Heart right ventricle (tissue), 16 donors: ENCODE measurements at regions of chr11 and their contacts with region 1.

Region 1: GRCh38 chr11:62427630-62428233 is 8.9 kb downstream of the SCGB1A1 start:
- DNase-seq: no peak
- ATAC-seq: no peak
- H3K4me3 ChIP-seq: no peak overlapping the region
- H3K27ac ChIP-seq: peak overlapping the region in 1 of 10 donors; percentile 72
- H3K4me1 ChIP-seq: peaks cover 0 to 75% (median 9%) of the 10 kb centered on the region in 9 donors
- H3K27me3 ChIP-seq: no peaks in the 10 kb centered on the region
- CTCF ChIP-seq: no peak

Region 2: DNA sequence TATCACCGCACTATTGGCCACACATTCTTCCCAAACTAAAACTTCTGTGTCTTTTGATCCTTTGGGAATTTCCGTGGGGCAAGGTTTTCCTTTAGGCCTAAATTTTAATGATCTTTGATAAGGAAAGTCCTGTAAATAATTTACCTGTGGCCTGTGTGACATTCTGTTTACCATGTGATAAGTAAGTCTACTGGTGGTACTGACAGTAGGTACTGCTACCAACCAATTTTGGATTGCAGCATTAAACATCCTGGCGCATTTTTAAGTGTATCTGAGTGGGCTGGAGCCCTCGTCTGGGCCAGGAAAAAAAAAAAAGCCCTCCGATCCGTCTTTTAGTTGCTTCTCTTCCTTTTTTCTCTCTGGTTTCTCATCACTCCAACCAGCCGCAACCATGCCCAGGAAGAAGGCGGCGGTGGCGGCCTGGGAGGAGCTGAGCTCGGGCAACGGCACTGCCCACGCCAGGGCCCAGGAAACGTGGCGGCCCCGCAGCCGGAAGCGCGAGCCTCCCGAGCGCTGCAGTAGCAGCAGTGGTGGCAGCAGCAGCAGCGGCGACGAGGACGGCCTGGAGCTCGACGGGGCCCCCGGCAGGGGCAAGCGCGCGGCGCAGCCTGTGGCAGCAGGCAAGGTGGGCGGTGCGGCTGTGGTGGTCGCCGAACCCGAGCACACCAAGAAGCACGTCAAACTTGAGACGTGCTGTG is 56.8 kb before region 1 on chr11:
- intact Hi-C with region 1: no loop called
- DNase-seq: peak in 1 of 2 donors; percentile 37
- ATAC-seq: no peak
- H3K4me3 ChIP-seq: peak overlapping the region in 2 of 10 donors; percentile 16 to 30
- H3K27ac ChIP-seq: peak overlapping the region in 1 of 10 donors; percentile 66
- H3K4me1 ChIP-seq: peaks cover 0 to 9% (median 0%) of the 10 kb centered on the region in 9 donors
- H3K27me3 ChIP-seq: no peaks in the 10 kb centered on the region
- CTCF ChIP-seq: no peak

Region 3: DNA sequence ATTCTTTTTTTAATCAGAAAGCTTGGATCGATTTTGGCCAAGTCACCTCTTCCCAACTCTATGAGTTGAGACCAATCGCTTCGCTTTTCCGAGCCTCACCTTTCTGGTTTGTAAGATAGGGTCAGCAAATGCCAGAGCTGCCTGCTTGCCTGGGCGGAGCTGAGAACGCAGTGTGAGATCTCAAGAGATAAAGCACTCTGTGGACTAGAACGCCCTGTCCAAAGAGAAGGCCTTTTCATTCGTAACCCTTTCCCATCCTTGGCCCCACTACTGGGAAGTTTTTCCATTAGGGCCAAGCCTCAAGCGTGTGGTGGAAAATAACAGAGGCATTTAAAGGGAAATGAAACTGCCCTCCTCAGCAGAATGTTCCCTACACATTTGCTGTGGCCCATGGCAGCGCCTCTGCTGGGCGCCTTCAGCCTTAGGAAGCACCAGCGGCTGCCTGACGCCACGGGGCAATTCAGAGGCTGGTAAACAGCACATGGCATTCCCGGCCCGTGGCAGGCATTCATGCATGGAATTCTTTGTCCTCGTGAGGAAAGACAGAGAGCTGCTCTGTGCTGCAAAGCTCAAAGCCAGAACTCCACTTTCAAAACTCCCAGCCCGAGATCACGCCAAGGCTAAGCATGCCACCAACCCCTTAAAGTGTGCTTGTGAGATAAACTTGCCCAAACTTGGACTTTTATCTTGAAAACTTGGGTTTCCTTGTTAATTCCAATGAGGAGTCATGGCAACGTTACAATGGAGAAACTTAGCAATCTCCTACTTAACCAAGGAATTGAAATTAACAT is 80.7 kb after region 1 on chr11:
- intact Hi-C with region 1: loop called in 2 of 10 experiments (anchors 5 to 10 kb)
- DNase-seq: peak; percentile 76 to 80
- ATAC-seq: peak; percentile 78 to 93 (median 89)
- H3K4me3 ChIP-seq: peak overlapping the region in 4 of 10 donors; percentile 19 to 29 (median 21)
- H3K27ac ChIP-seq: peak overlapping the region; percentile 1 to 89 (median 76)
- H3K4me1 ChIP-seq: peaks cover 7 to 67% (median 45%) of the 10 kb centered on the region in 9 donors
- H3K27me3 ChIP-seq: no peaks in the 10 kb centered on the region
- CTCF ChIP-seq: peak; percentile 6 to 71 (median 45)